ENCODE measurements at regions of chr3 and their contacts with region 1.

Region 1: GRCh38 chr3:128879125-128879969 is at the start of gene ACAD9:
- DNase-seq: peak; percentile 98
- H3K4me3 Mint-ChIP-seq: peak within 1 kb of the TSS; percentile 93
- H3K27ac Mint-ChIP-seq: peak within 1 kb of the TSS; percentile 95
- H3K4me1 Mint-ChIP-seq: peaks cover 61% of the 10 kb centered on the region
- H3K27me3 Mint-ChIP-seq: no peaks in the 10 kb centered on the region
- total RNA-seq, gene ACAD9: 45.3 to 45.5 TPM

Region 2: DNA sequence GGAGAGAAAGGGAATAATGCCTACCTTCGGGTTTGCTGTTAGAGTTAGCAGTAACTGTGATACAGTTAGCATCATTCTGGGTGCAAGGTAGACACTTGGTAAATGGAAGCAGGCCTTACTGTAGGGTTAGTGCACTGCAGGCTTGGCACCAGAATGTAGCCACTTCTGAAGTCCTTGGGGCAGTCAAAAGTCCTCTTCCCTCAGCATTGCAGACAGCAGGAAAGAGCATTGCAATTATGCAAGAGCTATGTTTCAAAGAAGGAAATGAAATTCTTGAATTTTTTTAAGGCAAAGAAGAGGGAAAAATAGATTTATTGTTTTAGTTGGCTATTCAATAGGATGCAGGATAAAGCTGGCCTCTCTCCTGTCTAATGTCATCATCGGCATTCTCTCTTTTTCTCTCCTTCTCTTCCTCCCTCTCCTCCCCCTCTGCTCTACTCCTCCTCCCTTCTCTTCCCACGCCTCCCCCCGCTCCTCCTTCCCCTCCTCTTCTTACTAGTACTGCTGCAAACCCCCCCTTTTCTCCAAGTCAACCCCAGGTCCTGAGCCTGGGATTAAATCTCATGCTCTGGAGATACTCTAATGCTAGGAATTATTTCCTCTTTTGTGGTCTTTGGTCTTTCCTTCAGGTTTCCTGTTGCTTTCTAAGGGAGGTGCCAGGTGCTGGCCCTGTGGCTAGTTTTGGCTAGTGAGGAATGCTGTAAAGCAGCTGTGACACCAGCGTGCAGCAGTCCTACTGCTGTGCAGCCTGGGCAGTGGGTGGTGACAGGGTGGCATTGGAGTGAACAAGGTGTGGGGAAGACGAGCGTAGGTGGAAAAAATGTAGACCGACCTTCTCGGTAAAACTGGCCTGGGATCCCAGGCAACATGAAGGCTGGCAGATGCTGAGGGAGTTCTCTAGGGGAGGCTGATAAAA is 704.4 kb before region 1 on chr3:
- CTCF ChIA-PET with region 1: no interaction called
- POLR2A ChIA-PET with region 1: no interaction called
- intact Hi-C with region 1: no loop called
- DNase-seq: no peak
- H3K4me3 Mint-ChIP-seq: no peak overlapping the region
- H3K27ac Mint-ChIP-seq: no peak overlapping the region
- H3K4me1 Mint-ChIP-seq: peaks cover 28% of the 10 kb centered on the region
- H3K27me3 Mint-ChIP-seq: no peaks in the 10 kb centered on the region

Region 3: GRCh38 chr3:128335324-128336201 is 543.8 kb before region 1 on chr3:
- CTCF ChIA-PET with region 1: no interaction called
- POLR2A ChIA-PET with region 1: no interaction called
- intact Hi-C with region 1: no loop called
- DNase-seq: no peak
- H3K4me3 Mint-ChIP-seq: no peak overlapping the region
- H3K27ac Mint-ChIP-seq: no peak overlapping the region
- H3K4me1 Mint-ChIP-seq: no peaks in the 10 kb centered on the region
- H3K27me3 Mint-ChIP-seq: no peaks in the 10 kb centered on the region

Region 4: GRCh38 chr3:128650096-128651050 is 229.0 kb before region 1 on chr3 and contains the start of gene RPN1:
- CTCF ChIA-PET with region 1: interaction called, 6 read pairs
- POLR2A ChIA-PET with region 1: interaction called, 11 read pairs
- intact Hi-C with region 1: loop called (anchors 2 kb)
- DNase-seq: peak; percentile 97
- H3K4me3 Mint-ChIP-seq: peak within 1 kb of the TSS; percentile 87
- H3K27ac Mint-ChIP-seq: peak within 1 kb of the TSS; percentile 89
- H3K4me1 Mint-ChIP-seq: peaks cover 37% of the 10 kb centered on the region
- H3K27me3 Mint-ChIP-seq: no peaks in the 10 kb centered on the region
- total RNA-seq, gene RPN1: 166 to 168 TPM

Region 5: GRCh38 chr3:128787256-128788240 is 91.8 kb before region 1 on chr3:
- CTCF ChIA-PET with region 1: interaction called, 4 read pairs
- POLR2A ChIA-PET with region 1: interaction called, 6 read pairs
- intact Hi-C with region 1: loop called (anchors 2 kb)
- DNase-seq: peak; percentile 60
- H3K4me3 Mint-ChIP-seq: peak overlapping the region; percentile 67
- H3K27ac Mint-ChIP-seq: peak overlapping the region; percentile 98
- H3K4me1 Mint-ChIP-seq: peaks cover 93% of the 10 kb centered on the region
- H3K27me3 Mint-ChIP-seq: no peaks in the 10 kb centered on the region

Region 6: GRCh38 chr3:128845778-128846485 is 33.4 kb before region 1 on chr3:
- CTCF ChIA-PET with region 1: interaction called, 11 read pairs
- POLR2A ChIA-PET with region 1: no interaction called
- intact Hi-C with region 1: no loop called
- DNase-seq: peak; percentile 92
- H3K4me3 Mint-ChIP-seq: peak overlapping the region; percentile 45
- H3K27ac Mint-ChIP-seq: peak overlapping the region; percentile 84
- H3K4me1 Mint-ChIP-seq: peaks cover 18% of the 10 kb centered on the region
- H3K27me3 Mint-ChIP-seq: no peaks in the 10 kb centered on the region

Region 7: DNA sequence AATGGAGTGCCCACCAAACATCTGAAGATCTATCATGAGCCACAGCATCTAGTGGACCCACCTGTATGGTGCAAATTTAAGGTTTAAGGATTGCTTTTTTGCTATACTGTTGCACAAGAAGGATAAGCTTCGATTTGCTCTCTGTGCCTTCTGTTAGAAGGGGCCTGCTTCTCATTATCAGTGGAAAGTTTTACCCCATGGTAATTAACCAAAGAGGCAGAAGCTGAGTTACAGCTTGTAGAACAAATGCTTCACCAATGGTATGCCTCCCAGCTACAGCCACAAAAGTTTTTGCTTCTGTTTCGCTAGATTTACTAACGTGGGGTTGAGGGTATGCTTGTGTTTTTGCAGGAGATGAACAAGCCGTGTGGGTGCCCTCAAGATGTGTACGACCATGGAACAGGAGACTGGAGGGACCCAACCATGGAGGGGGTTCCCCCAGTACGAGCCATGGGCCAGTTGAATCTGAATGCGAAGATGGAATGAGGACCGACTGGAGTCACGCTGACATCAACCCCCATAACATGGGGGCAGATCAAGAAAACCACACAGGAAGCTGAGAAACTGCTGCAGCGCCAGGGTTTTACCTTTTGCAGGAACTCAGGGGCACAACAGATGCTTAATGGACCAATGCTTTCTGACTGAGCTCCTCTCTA is 43.6 kb after region 1 on chr3:
- CTCF ChIA-PET with region 1: interaction called, 12 read pairs
- POLR2A ChIA-PET with region 1: interaction called, 4 read pairs
- intact Hi-C with region 1: loop called (anchors 1 kb)
- DNase-seq: peak; percentile 77
- H3K4me3 Mint-ChIP-seq: peak overlapping the region; percentile 55
- H3K27ac Mint-ChIP-seq: peak overlapping the region; percentile 40
- H3K4me1 Mint-ChIP-seq: peaks cover 29% of the 10 kb centered on the region
- H3K27me3 Mint-ChIP-seq: no peaks in the 10 kb centered on the region